MCF 10A (cell line): ENCODE measurements at regions of chr11 and their contacts with region 1.

Region 1: GRCh38 chr11:86360775-86361395 is 13.8 kb upstream of the CCDC81 start:
- DNase-seq: peak; percentile 44
- H3K4me3 Mint-ChIP-seq: no peak overlapping the region
- H3K27ac Mint-ChIP-seq: no peak overlapping the region
- H3K4me1 Mint-ChIP-seq: no peaks in the 10 kb centered on the region
- H3K27me3 Mint-ChIP-seq: no peaks in the 10 kb centered on the region
- CTCF ChIP-seq: peak; percentile 28

Region 2: GRCh38 chr11:86261331-86261730 is 99.6 kb before region 1 on chr11:
- CTCF ChIA-PET with region 1: no interaction called
- POLR2A ChIA-PET with region 1: no interaction called
- intact Hi-C with region 1: no loop called
- DNase-seq: no peak
- H3K4me3 Mint-ChIP-seq: no peak overlapping the region
- H3K27ac Mint-ChIP-seq: no peak overlapping the region
- H3K4me1 Mint-ChIP-seq: no peaks in the 10 kb centered on the region
- H3K27me3 Mint-ChIP-seq: no peaks in the 10 kb centered on the region
- CTCF ChIP-seq: no peak

Region 3: GRCh38 chr11:86346513-86346912 is 14.4 kb before region 1 on chr11:
- CTCF ChIA-PET with region 1: interaction called, 15 read pairs
- POLR2A ChIA-PET with region 1: interaction called, 8 read pairs
- intact Hi-C with region 1: no loop called
- DNase-seq: no peak
- H3K4me3 Mint-ChIP-seq: no peak overlapping the region
- H3K27ac Mint-ChIP-seq: no peak overlapping the region
- H3K4me1 Mint-ChIP-seq: no peaks in the 10 kb centered on the region
- H3K27me3 Mint-ChIP-seq: no peaks in the 10 kb centered on the region
- CTCF ChIP-seq: no peak

Region 4: DNA sequence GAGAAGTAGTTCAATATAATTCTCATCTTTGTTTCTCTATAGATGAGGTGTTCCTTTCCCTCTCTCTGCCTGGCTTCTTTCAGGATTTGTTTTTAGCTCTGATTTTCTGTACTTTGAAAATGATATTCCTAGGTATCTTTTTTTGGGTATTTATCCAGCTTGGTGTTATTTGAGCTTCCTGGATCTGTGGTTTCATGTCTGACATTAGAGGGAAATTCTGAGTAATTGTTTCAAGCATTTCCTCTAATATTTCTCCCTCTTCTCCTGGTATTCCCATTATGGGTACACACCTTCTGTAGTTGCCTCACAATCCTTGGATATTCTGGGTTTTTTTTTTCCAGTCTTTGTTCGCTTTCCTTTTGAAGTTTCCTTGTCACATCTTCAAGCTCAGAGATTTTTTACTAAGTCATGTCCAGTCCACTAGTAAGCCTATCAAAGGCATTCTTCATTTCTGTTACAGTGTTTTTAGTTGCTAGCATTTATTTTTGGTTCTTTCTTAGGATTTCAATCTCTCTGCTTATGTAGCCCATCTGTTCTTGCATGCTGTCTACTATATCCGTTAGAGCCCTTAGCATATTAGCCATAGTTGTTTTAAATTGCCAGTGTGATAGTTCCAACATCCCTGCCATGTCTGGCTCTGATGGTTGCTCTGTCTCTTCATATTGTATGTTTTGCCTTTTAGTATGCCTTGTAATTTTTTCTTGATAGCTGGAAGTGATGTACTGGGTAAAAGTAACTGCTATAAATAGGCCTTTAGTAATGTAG is 19.6 kb after region 1 on chr11:
- CTCF ChIA-PET with region 1: interaction called, 20 read pairs
- POLR2A ChIA-PET with region 1: no interaction called
- intact Hi-C with region 1: no loop called
- DNase-seq: no peak
- H3K4me3 Mint-ChIP-seq: no peak overlapping the region
- H3K27ac Mint-ChIP-seq: no peak overlapping the region
- H3K4me1 Mint-ChIP-seq: no peaks in the 10 kb centered on the region
- H3K27me3 Mint-ChIP-seq: no peaks in the 10 kb centered on the region
- CTCF ChIP-seq: no peak

Region 5: GRCh38 chr11:86408845-86409244 is 48.0 kb after region 1 on chr11:
- CTCF ChIA-PET with region 1: interaction called, 31 read pairs
- POLR2A ChIA-PET with region 1: no interaction called
- intact Hi-C with region 1: loop called (anchors 5 kb)
- DNase-seq: peak; percentile 2
- H3K4me3 Mint-ChIP-seq: no peak overlapping the region
- H3K27ac Mint-ChIP-seq: no peak overlapping the region
- H3K4me1 Mint-ChIP-seq: no peaks in the 10 kb centered on the region
- H3K27me3 Mint-ChIP-seq: no peaks in the 10 kb centered on the region
- CTCF ChIP-seq: peak; percentile 23

Region 6: DNA sequence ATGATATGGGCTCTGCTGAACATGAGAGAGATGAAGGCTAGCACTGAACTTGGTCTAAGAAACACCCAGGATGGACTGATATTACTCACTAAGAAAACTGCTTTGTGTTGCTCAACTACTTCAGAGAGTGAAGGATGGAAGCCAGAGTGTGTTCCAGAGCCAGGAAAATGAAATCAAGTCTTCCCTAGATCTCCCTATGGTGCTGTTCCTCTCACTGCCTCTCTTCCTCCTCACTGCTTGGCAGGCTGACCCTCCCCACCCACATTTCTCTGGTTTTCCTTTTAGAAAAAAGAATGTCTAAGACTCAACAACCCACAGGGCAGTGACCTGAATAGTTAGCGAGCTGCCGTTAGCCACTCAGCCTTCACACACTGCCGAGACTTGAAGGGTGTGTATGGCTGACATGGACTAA is 79.4 kb after region 1 on chr11:
- CTCF ChIA-PET with region 1: interaction called, 10 read pairs
- POLR2A ChIA-PET with region 1: no interaction called
- intact Hi-C with region 1: no loop called
- DNase-seq: peak; percentile 4
- H3K4me3 Mint-ChIP-seq: no peak overlapping the region
- H3K27ac Mint-ChIP-seq: no peak overlapping the region
- H3K4me1 Mint-ChIP-seq: peaks cover 4% of the 10 kb centered on the region
- H3K27me3 Mint-ChIP-seq: no peaks in the 10 kb centered on the region
- CTCF ChIP-seq: no peak

Region 7: GRCh38 chr11:86688398-86689179 is 327.7 kb after region 1 on chr11:
- CTCF ChIA-PET with region 1: no interaction called
- POLR2A ChIA-PET with region 1: no interaction called
- intact Hi-C with region 1: no loop called
- DNase-seq: no peak
- H3K4me3 Mint-ChIP-seq: no peak overlapping the region
- H3K27ac Mint-ChIP-seq: no peak overlapping the region
- H3K4me1 Mint-ChIP-seq: peaks cover 14% of the 10 kb centered on the region
- H3K27me3 Mint-ChIP-seq: no peaks in the 10 kb centered on the region
- CTCF ChIP-seq: no peak

Region 8: DNA sequence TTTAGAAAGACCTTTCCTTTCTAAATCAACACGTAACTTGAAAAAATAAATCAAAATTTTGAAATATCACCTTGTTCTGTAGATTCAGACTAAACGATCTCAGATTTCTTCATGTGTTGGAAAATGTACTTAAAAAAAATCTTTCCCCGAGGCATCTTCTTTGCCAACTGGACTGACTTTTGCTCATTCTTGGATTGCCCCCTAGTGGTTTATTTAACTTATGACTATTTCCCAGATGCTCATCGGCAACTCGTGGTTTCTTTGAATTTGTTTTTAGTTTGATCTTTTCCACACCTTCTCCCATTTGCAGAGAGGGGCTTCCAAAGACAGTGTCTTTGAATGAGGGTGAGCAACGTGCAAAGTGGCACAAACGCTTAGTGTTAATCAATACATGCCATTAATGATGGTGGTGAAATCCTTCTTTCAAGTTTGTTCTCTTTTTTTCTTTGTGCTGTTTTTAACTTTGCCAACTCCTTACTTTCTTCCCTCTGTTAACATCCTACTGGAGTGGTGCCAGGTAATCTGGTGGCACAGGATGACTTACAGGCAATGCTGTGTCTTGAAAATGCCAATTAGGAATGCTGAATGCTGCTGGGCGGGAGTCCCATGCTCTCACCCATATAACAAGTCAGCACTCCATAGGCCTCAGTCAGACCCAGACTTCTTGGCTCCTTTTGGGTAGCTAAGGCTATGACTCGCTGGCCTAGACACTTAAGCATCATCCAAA is 457.7 kb after region 1 on chr11:
- CTCF ChIA-PET with region 1: interaction called, 6 read pairs
- POLR2A ChIA-PET with region 1: no interaction called
- intact Hi-C with region 1: loop called (anchors 2 kb)
- DNase-seq: peak; percentile 75
- H3K4me3 Mint-ChIP-seq: no peak overlapping the region
- H3K27ac Mint-ChIP-seq: no peak overlapping the region
- H3K4me1 Mint-ChIP-seq: peaks cover 21% of the 10 kb centered on the region
- H3K27me3 Mint-ChIP-seq: no peaks in the 10 kb centered on the region
- CTCF ChIP-seq: peak; percentile 59